ENCODE measurements at regions of chr12 and their contacts with region 1.

Region 1: GRCh38 chr12:62603061-62603810 is 136.6 kb downstream of the MON2 start:
- DNase-seq: peak; percentile 35 to 91
- H3K4me3 ChIP-seq: peak overlapping the region; percentile 87 to 97
- H3K27ac ChIP-seq: peak overlapping the region; percentile 99 to 100
- H3K4me1 ChIP-seq: peaks cover 3 to 5% of the 10 kb centered on the region in 2 donors
- H3K27me3 ChIP-seq: no peaks in the 10 kb centered on the region
- CTCF ChIP-seq: peak; percentile 38 to 82 (median 59)

Region 2: GRCh38 chr12:62466594-62467491 is 136.4 kb before region 1 on chr12 and contains the start of gene MON2:
- intact Hi-C with region 1: loop called (anchors 2 kb)
- DNase-seq: peak; percentile 44 to 94
- H3K4me3 ChIP-seq: peak within 1 kb of the TSS; percentile 92 to 95
- H3K27ac ChIP-seq: peak within 1 kb of the TSS; percentile 92 to 95
- H3K4me1 ChIP-seq: peaks cover 0 to 18% of the 10 kb centered on the region in 2 donors
- H3K27me3 ChIP-seq: no peaks in the 10 kb centered on the region
- CTCF ChIP-seq: no peak
- total RNA-seq, gene MON2: 14.4 TPM

Region 3: DNA sequence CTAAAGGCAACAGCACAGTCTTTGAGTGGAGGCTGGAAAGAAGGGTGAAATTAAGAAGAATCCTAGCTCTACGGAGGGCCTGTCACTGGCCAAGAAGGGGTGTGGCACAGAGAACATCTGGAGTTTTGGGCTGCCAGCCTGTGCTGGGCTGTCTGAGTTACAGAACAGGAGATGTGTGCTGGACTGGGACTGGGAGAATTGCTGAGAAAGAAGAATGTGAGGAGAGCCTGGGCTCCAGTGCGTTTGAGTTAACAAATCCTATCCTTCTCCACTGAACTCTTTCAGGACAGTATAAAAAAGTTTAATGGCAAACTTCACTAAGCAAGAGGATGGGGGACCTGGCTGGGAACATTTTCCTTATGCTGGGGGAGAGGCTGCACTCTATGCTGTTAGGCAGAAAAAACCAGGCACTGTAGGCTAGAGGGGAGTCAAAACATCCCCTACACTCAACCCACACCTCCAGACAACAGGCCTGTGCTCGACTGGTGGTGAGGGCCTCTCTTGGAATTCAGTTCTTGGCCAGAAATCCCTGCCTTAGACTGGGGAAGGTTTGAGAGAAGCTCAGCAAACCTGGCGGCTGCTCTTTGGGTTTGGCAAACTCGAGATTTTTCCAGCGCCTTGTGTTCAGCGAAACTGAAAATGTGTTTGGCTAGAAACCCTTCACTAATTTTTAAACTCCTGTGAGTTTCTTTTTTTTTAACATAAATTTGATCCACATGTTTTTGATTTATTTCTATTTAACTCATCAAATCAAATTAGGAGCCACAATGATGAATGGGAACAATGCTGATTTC is 80.7 kb after region 1 on chr12:
- intact Hi-C with region 1: loop called (anchors 2 kb)
- DNase-seq: peak in 1 of 2 donors; percentile 78
- H3K4me3 ChIP-seq: no peak overlapping the region
- H3K27ac ChIP-seq: peak overlapping the region; percentile 79 to 85
- H3K4me1 ChIP-seq: peaks cover 6 to 23% of the 10 kb centered on the region in 2 donors
- H3K27me3 ChIP-seq: no peaks in the 10 kb centered on the region
- CTCF ChIP-seq: no peak

Region 4: GRCh38 chr12:62793256-62794217 is 190.3 kb after region 1 on chr12:
- intact Hi-C with region 1: loop called (anchors 1 kb)
- DNase-seq: peak; percentile 36 to 93
- H3K4me3 ChIP-seq: peak overlapping the region in 1 of 2 donors; percentile 23
- H3K27ac ChIP-seq: peak overlapping the region; percentile 14 to 19
- H3K4me1 ChIP-seq: peaks cover 5 to 15% of the 10 kb centered on the region in 2 donors
- H3K27me3 ChIP-seq: no peaks in the 10 kb centered on the region
- CTCF ChIP-seq: peak; percentile 79 to 97 (median 93)

Region 5: DNA sequence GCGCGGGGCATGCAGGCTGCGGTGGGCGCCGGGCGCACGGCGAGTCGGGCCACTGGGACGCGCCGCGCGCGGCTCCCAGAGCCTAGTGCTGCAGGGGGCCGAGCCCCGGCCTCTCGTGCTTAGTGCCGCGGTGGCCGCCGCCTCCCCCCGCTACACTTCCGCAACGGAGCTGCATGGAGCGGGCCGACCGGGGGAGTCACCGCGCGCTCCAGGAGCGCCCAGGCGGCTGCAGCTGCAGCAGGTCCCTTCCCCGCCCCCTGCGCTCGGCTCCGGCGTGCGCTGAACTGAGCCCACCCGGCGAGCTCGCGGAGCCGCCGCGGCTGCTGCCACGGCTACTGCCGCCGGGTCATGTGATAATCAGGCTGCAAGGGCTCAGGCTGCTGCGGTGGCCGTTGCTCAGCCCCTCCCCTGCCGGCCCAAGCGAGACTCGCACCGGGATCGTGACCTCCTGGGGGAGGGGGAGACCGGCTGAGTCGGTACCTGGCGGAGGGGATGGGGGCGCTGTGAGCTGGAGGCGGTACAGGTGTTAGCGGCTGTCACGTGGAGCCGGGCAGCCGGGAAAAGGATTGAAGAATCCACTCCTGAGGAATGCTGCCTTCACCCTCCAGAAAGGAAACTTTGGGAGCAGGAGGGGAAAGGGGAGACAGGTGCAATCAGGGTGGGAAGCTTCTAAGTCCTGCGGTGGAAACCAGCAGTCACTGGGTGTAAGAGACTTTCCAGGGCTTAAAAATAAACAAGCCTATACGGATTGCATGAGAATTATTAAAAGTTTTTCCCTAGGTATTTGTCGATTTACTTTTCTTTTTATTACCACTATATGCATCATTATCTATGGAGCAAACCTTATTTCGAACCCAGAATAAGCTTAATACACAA is 331.8 kb after region 1 on chr12 and contains the start of gene PPM1H:
- intact Hi-C with region 1: loop called (anchors 10 kb)
- DNase-seq: peak in 1 of 2 donors; percentile 69
- H3K4me3 ChIP-seq: peak within 1 kb of the TSS; percentile 70 to 83
- H3K27ac ChIP-seq: peak within 1 kb of the TSS; percentile 63 to 81
- H3K4me1 ChIP-seq: peaks cover 0 to 4% of the 10 kb centered on the region in 2 donors
- H3K27me3 ChIP-seq: no peaks in the 10 kb centered on the region
- CTCF ChIP-seq: peak; percentile 19 to 53 (median 43)
- total RNA-seq, gene PPM1H: 0.85 TPM